Right ventricle myocardium superior (tissue), 1 donor: ENCODE measurements at regions of chr16 and their contacts with region 1.

Region 1: GRCh38 chr16:2874912-2875362 is 8.1 kb upstream of the FLYWCH2 start:
- DNase-seq: peak; percentile 90
- ATAC-seq: peak; percentile 99

Region 2: GRCh38 chr16:2829501-2830356 is 45.2 kb before region 1 on chr16 and contains the start of gene ZG16B:
- intact Hi-C with region 1: no loop called
- DNase-seq: peak; percentile 24
- ATAC-seq: peak; percentile 12
- total RNA-seq, gene ZG16B: not detected

Region 3: DNA sequence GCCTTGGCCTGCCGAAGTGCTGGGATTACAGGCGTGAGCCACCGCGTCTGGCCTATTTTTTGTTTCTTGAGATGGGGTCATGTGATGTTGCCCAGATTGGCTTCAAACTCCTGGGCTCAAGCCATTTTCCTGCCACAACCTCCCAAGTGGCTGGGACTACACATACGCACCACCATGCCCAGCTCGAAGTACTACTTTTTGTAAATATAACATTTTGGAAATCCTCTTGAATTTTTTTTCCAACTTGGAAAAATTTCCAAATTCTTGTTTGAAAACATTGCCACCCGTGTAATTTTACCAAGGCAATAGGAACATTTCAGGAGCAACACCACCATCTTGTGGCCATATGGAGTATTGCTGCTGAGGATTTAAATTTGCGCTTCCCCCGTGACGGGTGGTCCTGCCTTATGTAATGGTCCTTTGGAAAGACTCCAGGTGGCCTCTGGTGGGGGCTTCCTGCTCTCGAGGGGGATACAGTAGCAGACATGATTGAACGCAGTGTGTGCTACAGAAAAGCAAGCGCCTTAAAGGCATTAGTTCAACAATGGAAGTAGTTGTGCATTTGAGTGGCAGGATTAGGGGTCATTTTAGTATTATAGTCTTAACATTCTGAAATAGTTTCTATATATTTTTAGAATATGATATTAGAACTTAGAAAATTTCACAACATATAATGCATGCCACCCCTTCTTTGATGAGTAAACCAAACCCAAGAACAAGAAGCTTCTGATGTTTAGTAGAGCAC is 44.7 kb after region 1 on chr16:
- intact Hi-C with region 1: loop called (anchors 2 kb)
- DNase-seq: no peak
- ATAC-seq: peak; percentile 81

Region 4: DNA sequence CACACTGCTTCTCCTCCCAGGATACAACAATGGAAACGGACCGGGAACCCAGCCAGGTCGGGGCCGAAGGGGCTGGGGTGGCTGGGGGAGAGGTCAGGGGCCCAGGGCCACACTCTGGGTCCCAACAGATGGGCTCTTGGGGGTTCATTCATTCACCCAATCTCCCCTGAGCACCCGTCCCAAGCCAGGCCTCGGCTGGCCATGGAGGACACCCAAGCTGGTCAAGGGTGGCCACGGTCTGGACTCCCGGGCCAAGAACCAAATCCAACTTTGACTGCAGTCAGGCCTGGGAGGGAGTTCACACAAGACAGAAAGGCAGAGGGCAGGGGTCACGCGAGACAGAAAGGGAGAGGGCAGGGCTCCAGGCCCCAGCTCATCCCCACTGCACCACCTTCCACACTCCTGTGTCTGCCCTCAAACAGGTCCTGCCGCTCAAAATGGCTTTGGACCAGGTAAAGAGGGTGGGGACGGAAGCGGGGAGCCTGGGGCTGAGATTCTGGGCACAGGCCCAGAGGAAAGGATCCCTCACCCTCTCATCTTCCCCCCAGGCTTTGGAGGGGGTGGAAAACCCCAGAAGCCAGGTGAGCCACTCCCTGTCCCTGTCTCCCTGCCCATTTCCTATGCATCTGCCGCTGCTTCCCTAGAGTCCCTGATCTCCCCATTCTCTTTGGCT is 117.6 kb after region 1 on chr16:
- intact Hi-C with region 1: no loop called
- DNase-seq: no peak
- ATAC-seq: no peak